ENCODE measurements at regions of chr2 and their contacts with region 1.

Region 1: GRCh38 chr2:216222650-216223352 is 113.7 kb downstream of the XRCC5 start:
- DNase-seq: no peak
- H3K4me3 ChIP-seq: no peak overlapping the region
- H3K27ac ChIP-seq: no peak overlapping the region
- H3K4me1 ChIP-seq: no peaks in the 10 kb centered on the region
- H3K27me3 ChIP-seq: no peaks in the 10 kb centered on the region
- CTCF ChIP-seq: peak; percentile 71 to 77 (median 76)
- EP300 ChIP-seq: no peak
- POLR2A ChIP-seq: no peak
- RAD21 ChIP-seq: peak; percentile 87

Region 2: GRCh38 chr2:216001216-216002100 is 221.3 kb before region 1 on chr2:
- CTCF ChIA-PET with region 1: no interaction called
- POLR2A ChIA-PET with region 1: no interaction called
- DNase-seq: no peak
- H3K4me3 ChIP-seq: no peak overlapping the region
- H3K27ac ChIP-seq: no peak overlapping the region
- H3K4me1 ChIP-seq: peaks cover 7 to 23% (median 9%) of the 10 kb centered on the region in 4 experiments
- H3K27me3 ChIP-seq: no peaks in the 10 kb centered on the region
- CTCF ChIP-seq: no peak
- EP300 ChIP-seq: no peak
- POLR2A ChIP-seq: no peak
- RAD21 ChIP-seq: no peak

Region 3: GRCh38 chr2:216066255-216066654 is 156.5 kb before region 1 on chr2:
- CTCF ChIA-PET with region 1: no interaction called
- POLR2A ChIA-PET with region 1: no interaction called
- DNase-seq: no peak
- H3K4me3 ChIP-seq: no peak overlapping the region
- H3K27ac ChIP-seq: no peak overlapping the region
- H3K4me1 ChIP-seq: peaks cover 0 to 3% (median under 1%) of the 10 kb centered on the region in 4 experiments; a peak in 1 of 7 replicates
- H3K27me3 ChIP-seq: no peaks in the 10 kb centered on the region
- CTCF ChIP-seq: no peak
- EP300 ChIP-seq: no peak
- POLR2A ChIP-seq: no peak
- RAD21 ChIP-seq: no peak

Region 4: GRCh38 chr2:216188956-216189355 is 33.8 kb before region 1 on chr2:
- CTCF ChIA-PET with region 1: no interaction called
- POLR2A ChIA-PET with region 1: no interaction called
- DNase-seq: no peak
- H3K4me3 ChIP-seq: no peak overlapping the region
- H3K27ac ChIP-seq: no peak overlapping the region
- H3K4me1 ChIP-seq: peaks cover 0 to 10% (median 5%) of the 10 kb centered on the region in 4 experiments; a peak in 6 of 7 replicates
- H3K27me3 ChIP-seq: no peaks in the 10 kb centered on the region
- CTCF ChIP-seq: no peak
- EP300 ChIP-seq: no peak
- POLR2A ChIP-seq: no peak
- RAD21 ChIP-seq: no peak

Region 5: GRCh38 chr2:216235462-216235861 is 12.7 kb after region 1 on chr2:
- CTCF ChIA-PET with region 1: interaction called, 12 read pairs
- POLR2A ChIA-PET with region 1: interaction called, 5 read pairs
- DNase-seq: no peak
- H3K4me3 ChIP-seq: no peak overlapping the region
- H3K27ac ChIP-seq: no peak overlapping the region
- H3K4me1 ChIP-seq: no peaks in the 10 kb centered on the region
- H3K27me3 ChIP-seq: no peaks in the 10 kb centered on the region
- CTCF ChIP-seq: no peak
- EP300 ChIP-seq: no peak
- POLR2A ChIP-seq: no peak
- RAD21 ChIP-seq: no peak

Region 6: DNA sequence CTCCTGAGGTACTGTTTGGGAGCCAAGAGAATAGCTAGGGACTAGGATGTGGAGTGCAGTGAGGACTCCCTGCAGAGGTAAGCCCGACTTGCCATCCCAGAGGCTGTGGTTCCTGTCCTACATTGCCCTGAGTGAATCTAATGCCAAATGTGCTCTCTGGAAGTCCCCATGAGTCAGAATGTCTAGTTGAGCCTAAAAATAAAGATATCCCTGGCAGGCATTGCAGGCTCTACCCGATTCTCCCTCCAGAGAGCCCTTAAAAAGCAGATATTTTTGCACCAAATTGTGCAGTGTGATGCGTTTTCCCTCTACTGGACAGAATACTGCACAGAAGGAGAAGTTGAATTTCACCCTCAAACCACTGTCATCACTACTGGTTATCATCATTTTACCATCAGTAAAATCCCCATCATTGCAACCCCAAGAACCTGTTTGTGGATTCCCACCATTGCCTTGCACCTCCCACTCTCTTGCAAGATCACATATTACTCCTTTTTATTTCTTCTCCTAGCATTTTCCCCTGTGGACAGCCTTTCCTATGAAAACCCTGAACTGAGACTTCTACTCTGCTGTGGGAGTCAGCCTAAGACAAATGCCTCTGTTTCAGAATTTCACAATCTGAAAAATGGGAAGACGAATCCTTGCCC is 51.5 kb after region 1 on chr2:
- CTCF ChIA-PET with region 1: interaction called, 12 read pairs
- POLR2A ChIA-PET with region 1: no interaction called
- DNase-seq: no peak
- H3K4me3 ChIP-seq: no peak overlapping the region
- H3K27ac ChIP-seq: no peak overlapping the region
- H3K4me1 ChIP-seq: no peaks in the 10 kb centered on the region; a peak in 1 of 7 replicates
- H3K27me3 ChIP-seq: no peaks in the 10 kb centered on the region
- CTCF ChIP-seq: no peak
- EP300 ChIP-seq: no peak
- POLR2A ChIP-seq: no peak
- RAD21 ChIP-seq: no peak

Region 7: DNA sequence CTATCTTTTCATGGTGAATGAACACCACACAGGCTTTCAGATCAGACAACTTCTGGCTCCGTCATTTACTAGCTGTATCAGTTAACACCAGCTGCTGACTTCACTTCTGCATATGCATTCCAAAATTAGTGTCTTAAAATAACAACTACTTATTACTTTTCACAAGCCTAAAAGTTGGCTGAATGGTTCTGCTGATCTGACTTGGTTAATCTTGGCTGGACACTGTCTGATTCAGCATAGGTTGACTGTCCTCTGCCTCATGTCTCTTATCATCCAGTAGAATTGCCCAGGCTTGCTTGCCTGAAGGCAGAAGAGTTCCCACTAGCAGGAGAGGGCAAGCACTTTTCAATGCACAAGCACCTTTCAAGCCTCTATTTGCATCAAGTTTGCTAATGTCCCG is 76.8 kb after region 1 on chr2:
- CTCF ChIA-PET with region 1: interaction called, 11 read pairs
- POLR2A ChIA-PET with region 1: no interaction called
- DNase-seq: no peak
- H3K4me3 ChIP-seq: no peak overlapping the region
- H3K27ac ChIP-seq: no peak overlapping the region
- H3K4me1 ChIP-seq: peaks cover 0 to 16% (median 10%) of the 10 kb centered on the region in 4 experiments; a peak in 5 of 7 replicates
- H3K27me3 ChIP-seq: 0 out of 7 replicates have a peak, but pooled peaks cover 0 to 3% (median 0%) of the 10 kb centered on the region in 4 experiments
- CTCF ChIP-seq: no peak
- EP300 ChIP-seq: no peak
- POLR2A ChIP-seq: no peak
- RAD21 ChIP-seq: no peak

Region 8: DNA sequence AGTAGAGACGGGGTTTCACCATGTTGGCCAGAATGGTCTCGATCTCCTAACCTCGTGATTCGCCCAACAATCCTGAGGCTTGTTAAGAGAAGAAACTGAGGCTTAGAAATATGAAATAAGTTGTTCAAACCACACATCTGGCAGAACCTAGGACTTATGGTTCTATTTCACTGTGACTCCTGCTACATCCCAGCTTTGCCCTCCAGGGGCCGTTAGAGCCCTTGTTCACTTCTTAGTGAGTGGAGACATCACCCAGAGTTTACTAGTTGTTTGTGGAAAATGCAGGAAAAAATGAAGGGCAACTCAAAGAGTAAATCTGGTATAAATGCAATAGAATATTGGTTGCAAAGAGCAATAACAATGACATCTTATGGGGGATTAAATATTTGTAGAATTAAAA is 105.5 kb after region 1 on chr2:
- CTCF ChIA-PET with region 1: interaction called, 13 read pairs
- POLR2A ChIA-PET with region 1: no interaction called
- DNase-seq: no peak
- H3K4me3 ChIP-seq: no peak overlapping the region
- H3K27ac ChIP-seq: no peak overlapping the region
- H3K4me1 ChIP-seq: peaks cover 0 to 4% (median 1%) of the 10 kb centered on the region in 4 experiments; a peak in 2 of 7 replicates
- H3K27me3 ChIP-seq: no peaks in the 10 kb centered on the region
- CTCF ChIP-seq: peak; percentile 17 to 63 (median 59)
- EP300 ChIP-seq: no peak
- POLR2A ChIP-seq: no peak
- RAD21 ChIP-seq: peak; percentile 78 to 83

Region 9: GRCh38 chr2:216498418-216499413 is 275.9 kb after region 1 on chr2 and contains the start of gene RPL37A:
- CTCF ChIA-PET with region 1: interaction called, 9 read pairs
- POLR2A ChIA-PET with region 1: interaction called, 15 read pairs
- DNase-seq: peak; percentile 75 to 90
- H3K4me3 ChIP-seq: peak within 1 kb of the TSS; percentile 86 to 97 (median 92)
- H3K27ac ChIP-seq: peak within 1 kb of the TSS; percentile 86
- H3K4me1 ChIP-seq: peaks cover 2 to 12% (median 4%) of the 10 kb centered on the region in 4 experiments; a peak in 6 of 7 replicates
- H3K27me3 ChIP-seq: no peaks in the 10 kb centered on the region
- CTCF ChIP-seq: no peak
- EP300 ChIP-seq: no peak
- POLR2A ChIP-seq: peak; percentile 98 to 100
- RAD21 ChIP-seq: no peak
- total RNA-seq, gene RPL37A: 3,180 and 3,341 TPM in 2 replicates

Measured in H1 (cell line).